CD4-positive, alpha-beta T cell (primary cell): ENCODE measurements at regions of chr7 and their contacts with region 1.

Region 1: GRCh38 chr7:149662591-149663095 is 110.7 kb downstream of the ZNF467 start:
- DNase-seq: peak; percentile 33 to 74 (median 55)
- ATAC-seq: peak; percentile 80
- H3K4me3 ChIP-seq: no peak overlapping the region
- H3K4me3 Mint-ChIP-seq: no peak overlapping the region
- H3K27ac ChIP-seq: no peak overlapping the region
- H3K27ac Mint-ChIP-seq: no peak overlapping the region
- H3K4me1 ChIP-seq: no peaks in the 10 kb centered on the region
- H3K4me1 Mint-ChIP-seq: no peaks in the 10 kb centered on the region
- H3K27me3 ChIP-seq: peaks cover 0 to 6% of the 10 kb centered on the region in 2 experiments
- H3K27me3 Mint-ChIP-seq: peaks cover 75% of the 10 kb centered on the region
- CTCF ChIP-seq: peak; percentile 38

Region 2: GRCh38 chr7:149624006-149624405 is 38.6 kb before region 1 on chr7:
- CTCF ChIA-PET with region 1: no interaction called
- POLR2A ChIA-PET with region 1: no interaction called
- intact Hi-C with region 1: no loop called
- DNase-seq: peak; percentile 30 to 73 (median 44)
- ATAC-seq: peak; percentile 39
- H3K4me3 ChIP-seq: peak overlapping the region; percentile 83
- H3K4me3 Mint-ChIP-seq: peak overlapping the region; percentile 92
- H3K27ac ChIP-seq: peak overlapping the region in 1 of 2 donors; percentile 41
- H3K27ac Mint-ChIP-seq: peak overlapping the region; percentile 70
- H3K4me1 ChIP-seq: peaks cover 47% of the 10 kb centered on the region
- H3K4me1 Mint-ChIP-seq: peaks cover 40% of the 10 kb centered on the region
- H3K27me3 ChIP-seq: no peaks in the 10 kb centered on the region
- H3K27me3 Mint-ChIP-seq: peaks cover 3% of the 10 kb centered on the region
- CTCF ChIP-seq: no peak

Region 3: GRCh38 chr7:149742075-149742701 is 79.5 kb after region 1 on chr7:
- CTCF ChIA-PET with region 1: interaction called, 19 read pairs
- POLR2A ChIA-PET with region 1: interaction called, 3 read pairs
- intact Hi-C with region 1: loop called in 1 of 2 experiments (anchors 2 kb)
- DNase-seq: peak in 13 of 14 experiments; percentile 32 to 73 (median 50)
- ATAC-seq: peak; percentile 62
- H3K4me3 ChIP-seq: no peak overlapping the region
- H3K4me3 Mint-ChIP-seq: peak overlapping the region; percentile 61
- H3K27ac ChIP-seq: no peak overlapping the region
- H3K27ac Mint-ChIP-seq: no peak overlapping the region
- H3K4me1 ChIP-seq: peaks cover 12% of the 10 kb centered on the region
- H3K4me1 Mint-ChIP-seq: peaks cover 11% of the 10 kb centered on the region
- H3K27me3 ChIP-seq: peaks cover 11 to 14% of the 10 kb centered on the region in 2 experiments
- H3K27me3 Mint-ChIP-seq: peaks cover 60% of the 10 kb centered on the region
- CTCF ChIP-seq: peak; percentile 95

Region 4: GRCh38 chr7:149799397-149800171 is 136.9 kb after region 1 on chr7:
- CTCF ChIA-PET with region 1: interaction called, 8 read pairs
- POLR2A ChIA-PET with region 1: no interaction called
- intact Hi-C with region 1: loop called (anchors 2 kb)
- DNase-seq: peak; percentile 49 to 78 (median 64)
- ATAC-seq: peak; percentile 73
- H3K4me3 ChIP-seq: no peak overlapping the region
- H3K4me3 Mint-ChIP-seq: no peak overlapping the region
- H3K27ac ChIP-seq: no peak overlapping the region
- H3K27ac Mint-ChIP-seq: no peak overlapping the region
- H3K4me1 ChIP-seq: no peaks in the 10 kb centered on the region
- H3K4me1 Mint-ChIP-seq: no peaks in the 10 kb centered on the region
- H3K27me3 ChIP-seq: no peaks in the 10 kb centered on the region
- H3K27me3 Mint-ChIP-seq: no peaks in the 10 kb centered on the region
- CTCF ChIP-seq: peak; percentile 66